Activated CD4-positive, alpha-beta memory T cell treated with anti-CD3 and anti-CD28 coated beads for 36 hours (primary cell): ENCODE measurements at regions of chr1 and their contacts with region 1.

Region 1: DNA sequence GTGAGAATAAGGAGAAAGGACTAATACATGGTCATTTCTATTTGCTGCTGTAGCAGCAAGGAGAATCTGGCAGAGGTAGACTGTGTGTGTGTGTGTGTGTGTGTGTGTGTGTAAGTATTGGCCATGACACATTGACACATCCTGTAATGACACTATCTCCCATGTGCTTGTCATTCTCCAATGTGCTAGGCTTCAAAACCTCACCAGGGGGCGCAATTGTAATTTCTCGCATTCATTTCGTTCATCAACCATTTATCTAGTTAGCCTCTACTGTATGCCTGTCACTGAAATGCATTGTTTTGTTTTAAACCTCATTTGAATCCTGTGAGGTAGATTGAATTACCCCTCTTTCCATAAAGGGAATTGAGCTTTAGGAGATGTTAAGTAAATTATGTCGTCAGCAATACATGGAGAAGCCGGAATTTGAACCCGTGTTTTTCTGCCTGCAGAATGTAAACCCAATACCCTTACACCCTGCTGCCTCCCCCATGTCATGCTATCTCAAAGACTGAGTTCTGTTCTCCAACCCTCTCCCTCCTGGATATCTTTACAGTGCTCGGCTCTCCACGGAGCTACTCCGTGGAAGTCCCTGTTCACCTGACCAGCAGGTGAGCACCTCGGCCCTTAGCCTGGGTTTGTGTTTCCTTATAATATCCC is 100.8 kb downstream of the UCK2 start:
- DNase-seq: peak; percentile 68
- H3K4me3 Mint-ChIP-seq: no peak overlapping the region
- H3K27ac Mint-ChIP-seq: no peak overlapping the region
- H3K4me1 Mint-ChIP-seq: no peaks in the 10 kb centered on the region
- H3K27me3 Mint-ChIP-seq: peaks cover 12% of the 10 kb centered on the region

Region 2: GRCh38 chr1:165527251-165528007 is 400.8 kb before region 1 on chr1:
- CTCF ChIA-PET with region 1: no interaction called
- POLR2A ChIA-PET with region 1: no interaction called
- intact Hi-C with region 1: no loop called
- DNase-seq: no peak
- H3K4me3 Mint-ChIP-seq: no peak overlapping the region
- H3K27ac Mint-ChIP-seq: no peak overlapping the region
- H3K4me1 Mint-ChIP-seq: no peaks in the 10 kb centered on the region
- H3K27me3 Mint-ChIP-seq: peaks cover 30% of the 10 kb centered on the region

Region 3: DNA sequence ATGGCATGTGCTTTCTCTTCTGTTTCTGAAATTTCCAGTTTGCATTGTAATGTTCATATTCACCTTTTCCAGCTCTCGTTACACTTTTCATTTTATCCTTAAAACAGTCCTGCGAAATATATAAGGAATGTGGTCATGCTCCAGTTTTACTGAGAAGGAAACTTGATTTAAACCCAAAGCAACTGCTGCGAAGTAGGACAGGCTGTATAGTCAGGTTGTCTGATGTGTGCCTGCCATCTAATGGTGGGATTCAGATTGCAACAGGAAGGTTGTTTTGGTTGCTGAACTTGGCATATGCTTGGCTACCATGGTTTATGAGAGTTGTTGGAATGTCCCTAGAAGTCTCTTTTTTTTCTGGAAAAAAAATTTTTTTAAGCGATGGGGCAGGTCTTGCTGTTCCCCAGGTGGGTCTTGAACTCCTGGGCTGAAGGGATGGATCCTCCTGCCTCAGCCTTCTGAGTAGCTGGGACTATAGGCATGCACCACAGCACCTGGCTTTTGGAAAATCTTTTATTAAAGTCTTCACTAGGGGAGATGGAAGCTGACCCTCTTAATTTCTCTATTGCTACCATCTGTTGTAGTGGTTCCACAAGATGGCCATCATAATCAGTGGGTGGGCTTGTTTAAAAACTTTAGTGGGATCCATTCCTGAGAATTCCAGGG is 13.9 kb before region 1 on chr1:
- CTCF ChIA-PET with region 1: interaction called, 10 read pairs
- POLR2A ChIA-PET with region 1: no interaction called
- intact Hi-C with region 1: no loop called
- DNase-seq: peak; percentile 71
- H3K4me3 Mint-ChIP-seq: no peak overlapping the region
- H3K27ac Mint-ChIP-seq: no peak overlapping the region
- H3K4me1 Mint-ChIP-seq: peaks cover 3% of the 10 kb centered on the region
- H3K27me3 Mint-ChIP-seq: no peaks in the 10 kb centered on the region

Region 4: GRCh38 chr1:166064313-166064926 is 136.2 kb after region 1 on chr1:
- CTCF ChIA-PET with region 1: no interaction called
- POLR2A ChIA-PET with region 1: no interaction called
- intact Hi-C with region 1: no loop called
- DNase-seq: no peak
- H3K4me3 Mint-ChIP-seq: no peak overlapping the region
- H3K27ac Mint-ChIP-seq: no peak overlapping the region
- H3K4me1 Mint-ChIP-seq: no peaks in the 10 kb centered on the region
- H3K27me3 Mint-ChIP-seq: no peaks in the 10 kb centered on the region

Region 5: GRCh38 chr1:166119471-166119965 is 191.3 kb after region 1 on chr1:
- CTCF ChIA-PET with region 1: no interaction called
- POLR2A ChIA-PET with region 1: no interaction called
- intact Hi-C with region 1: no loop called
- DNase-seq: no peak
- H3K4me3 Mint-ChIP-seq: no peak overlapping the region
- H3K27ac Mint-ChIP-seq: no peak overlapping the region
- H3K4me1 Mint-ChIP-seq: no peaks in the 10 kb centered on the region
- H3K27me3 Mint-ChIP-seq: peaks cover 2% of the 10 kb centered on the region

Region 6: DNA sequence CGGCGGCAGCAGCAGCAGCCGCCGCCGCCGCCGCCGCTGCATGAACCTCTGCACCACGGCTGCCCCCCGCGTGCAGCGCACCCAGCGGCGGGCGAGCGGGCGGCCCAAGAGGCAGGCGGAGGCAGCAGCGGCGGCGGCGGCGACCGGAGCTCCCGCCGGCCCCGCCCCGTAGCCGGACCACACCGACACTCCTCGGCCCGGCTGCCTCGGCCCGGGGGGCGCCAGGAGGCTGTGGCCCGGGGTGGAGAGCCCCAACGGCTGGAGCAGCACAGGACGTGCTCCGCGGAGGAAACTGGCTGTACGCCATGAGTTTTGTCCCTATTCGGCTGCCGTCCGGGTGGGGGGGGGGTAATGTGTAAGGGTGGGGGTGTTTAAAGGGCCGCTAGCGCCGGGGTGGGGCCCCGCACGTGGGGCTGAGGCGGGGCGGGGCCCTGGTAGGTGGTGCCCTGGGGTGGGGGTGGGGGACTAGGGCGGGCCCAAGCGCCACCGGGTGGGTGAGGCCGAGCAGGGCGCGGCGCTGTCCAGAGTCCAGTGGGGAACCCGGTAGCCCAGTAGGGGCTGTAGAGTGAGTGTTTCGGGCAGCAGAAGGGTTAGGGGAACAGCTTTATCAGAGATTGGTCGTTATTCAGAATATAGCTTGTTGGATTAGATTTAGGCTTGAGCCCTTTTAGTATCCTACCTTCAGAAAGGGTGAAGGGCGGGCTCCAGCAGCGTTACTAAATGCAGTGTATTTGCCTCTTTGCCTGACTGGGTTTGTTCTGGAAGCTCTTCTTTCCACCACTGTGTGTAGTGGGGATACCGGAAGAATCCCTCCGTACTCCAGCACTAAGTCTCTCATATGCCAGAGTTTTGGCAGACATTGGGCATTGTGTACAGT is 238.7 kb after region 1 on chr1 and contains the start of gene FAM78B:
- CTCF ChIA-PET with region 1: interaction called, 5 read pairs
- POLR2A ChIA-PET with region 1: no interaction called
- intact Hi-C with region 1: loop called (anchors 5 kb)
- DNase-seq: peak; percentile 72
- H3K4me3 Mint-ChIP-seq: peak within 1 kb of the TSS; percentile 67
- H3K27ac Mint-ChIP-seq: no peak within 1 kb of the TSS
- H3K4me1 Mint-ChIP-seq: peaks cover 23% of the 10 kb centered on the region
- H3K27me3 Mint-ChIP-seq: peaks cover 33% of the 10 kb centered on the region
- total RNA-seq, gene FAM78B: 0.24 to 0.27 TPM

Region 7: DNA sequence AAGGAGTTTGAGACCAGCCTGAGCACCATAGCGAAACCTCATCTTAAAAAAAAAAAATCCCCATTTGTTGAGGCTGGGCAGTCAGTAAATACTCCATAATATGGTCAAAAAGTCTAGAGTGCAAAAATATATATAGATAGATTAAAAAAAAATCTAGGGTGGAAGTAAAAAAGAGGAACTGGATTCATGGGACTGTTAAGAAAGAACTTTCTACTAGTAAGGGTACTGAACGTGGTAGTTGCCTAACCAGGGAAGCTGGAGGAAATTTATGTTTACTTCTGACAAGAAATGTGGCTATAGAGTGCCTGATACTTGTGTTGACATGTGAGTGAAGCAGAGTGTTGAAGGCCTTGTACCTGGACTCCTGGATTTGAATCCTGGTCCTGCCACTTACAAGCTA is 504.5 kb after region 1 on chr1:
- CTCF ChIA-PET with region 1: interaction called, 3 read pairs
- POLR2A ChIA-PET with region 1: no interaction called
- intact Hi-C with region 1: loop called (anchors 1 kb)
- DNase-seq: no peak
- H3K4me3 Mint-ChIP-seq: no peak overlapping the region
- H3K27ac Mint-ChIP-seq: no peak overlapping the region
- H3K4me1 Mint-ChIP-seq: no peaks in the 10 kb centered on the region
- H3K27me3 Mint-ChIP-seq: peaks cover 6% of the 10 kb centered on the region

Region 8: DNA sequence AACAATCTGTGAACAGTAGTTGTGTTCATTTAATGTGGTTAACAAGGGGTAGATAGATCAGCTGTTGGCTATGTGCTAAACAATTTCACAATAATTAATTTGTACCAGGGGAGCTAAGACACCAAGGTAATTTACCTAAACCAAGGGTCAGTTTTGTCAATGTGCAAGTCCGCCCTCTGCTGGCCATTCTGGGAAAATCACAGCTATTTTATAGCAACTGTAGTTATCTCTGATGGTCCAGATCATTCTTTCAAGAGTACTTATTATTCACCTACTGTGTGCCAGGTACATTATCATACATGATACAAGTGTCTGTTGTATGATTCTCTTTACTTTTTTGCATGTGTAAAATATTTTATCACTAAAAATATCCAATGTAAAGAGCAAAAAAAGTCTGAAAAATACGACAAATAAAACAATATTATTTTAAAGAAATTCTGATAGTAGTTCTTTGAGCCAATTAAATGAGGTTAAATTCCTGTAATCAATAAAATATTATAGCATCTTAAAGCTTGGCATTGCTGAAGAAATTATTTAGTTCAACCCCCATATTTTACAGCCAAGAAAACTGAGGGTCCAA is 550.9 kb after region 1 on chr1:
- CTCF ChIA-PET with region 1: interaction called, 14 read pairs
- POLR2A ChIA-PET with region 1: no interaction called
- intact Hi-C with region 1: loop called (anchors 1 kb)
- DNase-seq: peak; percentile 68
- H3K4me3 Mint-ChIP-seq: no peak overlapping the region
- H3K27ac Mint-ChIP-seq: no peak overlapping the region
- H3K4me1 Mint-ChIP-seq: no peaks in the 10 kb centered on the region
- H3K27me3 Mint-ChIP-seq: no peaks in the 10 kb centered on the region